BJ (cell line): ENCODE measurements at regions of chr11 and their contacts with region 1.

Region 1: GRCh38 chr11:82930229-82930628 is 28.7 kb downstream of the DDIAS start:
- DNase-seq: no peak
- H3K4me3 ChIP-seq: no peak overlapping the region
- H3K27me3 ChIP-seq: no peaks in the 10 kb centered on the region
- CTCF ChIP-seq: no peak

Region 2: DNA sequence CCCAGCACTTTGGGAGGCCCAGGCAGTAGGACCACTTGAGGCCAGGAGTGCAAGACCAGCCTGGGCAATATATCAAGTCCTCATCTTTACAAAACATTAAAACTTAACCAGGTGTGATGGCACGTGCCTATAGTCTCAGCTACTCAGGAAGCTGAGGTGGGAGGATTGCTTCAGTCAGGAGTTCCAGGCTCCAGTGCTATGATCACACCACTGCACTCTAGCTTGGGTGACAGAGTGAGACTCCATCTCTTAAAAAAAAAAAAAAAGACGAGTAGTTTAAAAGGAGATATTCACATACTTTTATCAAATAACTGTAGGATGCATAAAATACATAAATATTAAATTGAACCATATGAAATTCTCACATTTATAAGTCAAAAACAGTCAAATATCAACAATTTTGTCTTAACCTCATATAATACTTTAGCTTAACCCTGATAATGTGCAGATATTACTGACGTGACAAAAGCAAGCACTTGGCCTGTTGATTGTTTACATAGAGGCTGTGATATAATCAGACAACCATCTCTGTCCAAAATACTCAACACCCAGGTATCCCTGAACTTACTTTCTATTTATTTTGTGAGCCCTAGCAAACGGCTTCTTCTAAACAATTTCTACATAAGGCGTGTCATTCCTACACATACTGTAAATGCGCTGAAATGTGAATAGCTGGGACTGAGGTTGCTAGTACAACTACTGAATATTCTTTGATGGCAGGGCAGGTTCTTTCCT is 87.0 kb before region 1 on chr11:
- CTCF ChIA-PET with region 1: no interaction called
- POLR2A ChIA-PET with region 1: interaction called, 10 read pairs
- DNase-seq: no peak
- H3K4me3 ChIP-seq: no peak overlapping the region
- H3K27me3 ChIP-seq: no peaks in the 10 kb centered on the region
- CTCF ChIP-seq: no peak

Region 3: DNA sequence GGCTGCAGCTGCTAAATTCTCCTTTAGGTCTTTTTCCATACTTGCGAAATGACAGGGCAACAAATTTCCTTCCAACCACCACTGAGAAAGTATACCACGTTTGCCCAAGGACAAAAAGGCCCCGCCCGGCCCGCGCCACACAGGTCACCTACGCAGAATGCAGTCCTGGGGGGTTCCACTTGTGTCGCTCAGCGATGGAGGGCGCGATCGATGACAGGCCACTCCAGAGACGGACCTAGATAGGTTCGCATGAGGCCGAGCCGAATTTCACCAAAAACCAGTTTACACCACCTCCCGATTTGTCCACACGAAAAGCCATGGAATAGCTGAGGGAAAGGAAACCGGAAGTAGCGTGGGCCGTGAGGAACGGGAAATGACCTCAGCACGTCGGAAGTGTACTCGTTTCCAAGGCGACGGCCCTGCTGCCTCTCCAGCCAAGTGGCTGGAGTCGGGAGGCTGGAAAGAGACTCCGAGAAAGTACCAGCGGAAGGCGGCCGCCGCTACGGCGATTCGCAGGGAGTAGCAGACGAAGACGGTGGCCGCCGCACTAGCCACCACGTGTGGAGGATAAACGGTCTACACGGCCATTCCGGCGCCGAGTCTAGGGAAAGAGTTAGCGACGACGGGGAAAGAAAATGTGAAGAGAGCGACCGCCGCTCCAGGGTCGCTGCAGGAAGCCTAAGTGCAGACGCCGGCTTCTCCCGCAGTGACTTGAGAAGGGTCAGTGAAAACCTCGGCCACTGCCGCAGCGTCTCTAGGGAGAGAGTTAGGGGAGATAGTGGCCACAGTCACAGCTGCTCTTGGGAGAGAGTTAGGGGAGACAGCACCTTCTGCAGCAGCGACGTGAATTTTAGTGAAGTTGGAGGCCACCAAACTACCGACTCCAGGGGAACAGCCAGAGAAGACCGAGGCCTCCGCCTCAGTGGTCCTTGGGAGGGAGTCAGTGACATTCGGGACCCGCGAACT is 263.4 kb after region 1 on chr11 and contains the start of gene ANKRD42:
- CTCF ChIA-PET with region 1: no interaction called
- POLR2A ChIA-PET with region 1: interaction called, 22 read pairs
- DNase-seq: peak; percentile 63
- H3K4me3 ChIP-seq: peak within 1 kb of the TSS; percentile 77
- H3K27me3 ChIP-seq: no peaks in the 10 kb centered on the region
- CTCF ChIP-seq: no peak
- polyA plus RNA-seq, gene ANKRD42: 5.1 and 9.1 TPM in 2 replicates